ENCODE measurements at regions of chr5 and their contacts with region 1.

Region 1: DNA sequence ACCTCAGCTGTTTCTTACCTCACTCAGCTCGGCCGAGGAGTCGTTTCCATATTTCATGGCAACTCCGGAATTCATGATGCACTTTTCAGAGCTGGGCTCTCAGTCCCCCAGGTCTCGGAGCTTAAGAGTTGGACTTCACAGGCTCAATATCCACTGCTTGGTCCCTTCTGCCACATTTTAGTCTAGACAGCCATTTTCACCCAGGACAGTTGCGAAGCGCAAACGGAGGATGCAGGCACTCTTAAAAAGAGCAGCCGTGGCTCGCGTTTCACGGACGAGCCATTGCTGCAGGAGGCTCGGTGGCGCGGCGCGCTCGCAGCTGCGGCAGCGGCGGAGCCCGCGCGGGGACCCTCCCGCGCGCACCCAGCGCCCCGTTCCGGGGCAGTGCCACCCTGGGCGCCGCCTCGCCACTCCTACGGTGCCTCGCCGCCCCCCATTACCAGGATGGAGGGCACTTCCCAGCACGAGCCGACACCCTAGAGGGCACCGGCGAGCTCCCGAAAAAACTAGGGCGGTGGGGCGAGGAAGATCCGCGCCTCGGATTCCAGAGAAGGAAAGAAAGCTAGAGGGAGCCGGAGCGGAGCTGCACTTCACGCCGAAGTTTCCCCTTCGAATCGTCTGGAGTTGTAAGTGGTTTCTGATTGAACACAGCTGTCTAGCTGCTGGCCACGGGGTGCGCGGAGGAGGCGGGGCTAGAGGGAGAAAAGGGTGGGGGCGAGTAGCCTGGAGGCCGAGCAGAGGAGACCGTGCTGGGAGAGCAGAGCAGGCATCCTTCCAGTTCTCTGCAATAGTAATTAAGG is 140.3 kb downstream of the TSSK1B start:
- DNase-seq: peak; percentile 92 to 96
- ATAC-seq: peak; percentile 97 to 99 (median 98)
- H3K4me3 ChIP-seq: peak overlapping the region; percentile 58 to 93 (median 76)
- H3K27ac ChIP-seq: peak overlapping the region; percentile 79 to 96 (median 92)
- H3K4me1 ChIP-seq: peaks cover 0 to 51% (median 27%) of the 10 kb centered on the region in 9 donors
- H3K27me3 ChIP-seq: peaks cover 0 to 52% (median 0%) of the 10 kb centered on the region in 7 donors
- CTCF ChIP-seq: peak in 3 of 9 donors; percentile 44 to 50 (median 48)

Region 2: GRCh38 chr5:113043491-113043931 is 251.0 kb before region 1 on chr5:
- intact Hi-C with region 1: loop called in 3 of 10 experiments (anchors 10 kb)
- DNase-seq: peak; percentile 70 to 76
- ATAC-seq: peak; percentile 77 to 96 (median 94)
- H3K4me3 ChIP-seq: no peak overlapping the region
- H3K27ac ChIP-seq: peak overlapping the region in 7 of 10 donors; percentile 10 to 68 (median 50)
- H3K4me1 ChIP-seq: peaks cover 4 to 27% (median 17%) of the 10 kb centered on the region in 9 donors
- H3K27me3 ChIP-seq: no peaks in the 10 kb centered on the region
- CTCF ChIP-seq: peak; percentile 15 to 64 (median 40)

Region 3: DNA sequence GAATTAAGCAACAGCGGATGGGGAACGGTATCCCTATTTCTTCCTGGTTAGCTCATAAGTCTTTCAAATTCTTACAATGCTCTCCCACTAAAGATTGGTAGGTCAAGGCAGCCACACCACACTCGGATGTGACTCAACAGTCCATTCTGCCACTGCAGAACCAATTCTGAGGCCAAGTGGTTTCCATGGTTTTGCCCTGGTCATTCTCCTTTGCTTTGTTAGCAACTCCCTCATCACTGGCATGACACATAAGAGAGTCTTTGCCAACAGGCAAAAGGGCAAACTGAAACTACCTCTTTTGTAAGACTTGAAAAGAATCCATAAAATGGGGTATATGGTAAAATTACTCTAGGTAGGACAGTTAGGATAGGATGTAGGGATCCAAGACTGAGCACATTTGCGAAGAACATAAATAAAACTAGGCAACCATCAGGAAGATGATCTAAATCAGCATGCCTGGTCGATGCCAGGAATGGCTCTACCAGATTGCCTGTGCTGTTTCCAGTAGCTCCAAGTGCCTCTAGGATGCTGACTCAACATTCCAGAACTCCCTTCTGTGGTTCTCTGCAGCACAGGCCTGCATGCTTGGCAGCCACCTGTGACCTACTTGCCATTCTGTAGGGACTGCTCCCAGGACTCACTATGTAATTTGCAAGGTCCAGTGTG is 212.5 kb before region 1 on chr5:
- intact Hi-C with region 1: loop called in 4 of 10 experiments (anchors 5 to 10 kb)
- DNase-seq: no peak
- ATAC-seq: peak in 1 of 8 donors; percentile 55
- H3K4me3 ChIP-seq: no peak overlapping the region
- H3K27ac ChIP-seq: no peak overlapping the region
- H3K4me1 ChIP-seq: peaks cover 0 to 49% (median 28%) of the 10 kb centered on the region in 9 donors
- H3K27me3 ChIP-seq: no peaks in the 10 kb centered on the region
- CTCF ChIP-seq: no peak

Region 4: GRCh38 chr5:113123618-113124017 is 170.9 kb before region 1 on chr5:
- intact Hi-C with region 1: loop called in 2 of 10 experiments (anchors 5 to 10 kb)
- DNase-seq: no peak
- ATAC-seq: no peak
- H3K4me3 ChIP-seq: no peak overlapping the region
- H3K27ac ChIP-seq: peak overlapping the region in 2 of 10 donors; percentile 9 to 38
- H3K4me1 ChIP-seq: peaks cover 10 to 73% (median 61%) of the 10 kb centered on the region in 9 donors
- H3K27me3 ChIP-seq: no peaks in the 10 kb centered on the region
- CTCF ChIP-seq: peak in 3 of 9 donors; percentile 32 to 39 (median 39)

Region 5: GRCh38 chr5:113204525-113205161 is 89.9 kb before region 1 on chr5:
- intact Hi-C with region 1: loop called in 5 of 10 experiments (anchors 5 kb)
- DNase-seq: peak; percentile 38 to 45
- ATAC-seq: peak in 6 of 8 donors; percentile 12 to 61 (median 42)
- H3K4me3 ChIP-seq: no peak overlapping the region
- H3K27ac ChIP-seq: peak overlapping the region in 6 of 10 donors; percentile 3 to 76 (median 43)
- H3K4me1 ChIP-seq: peaks cover 2 to 93% (median 73%) of the 10 kb centered on the region in 9 donors
- H3K27me3 ChIP-seq: no peaks in the 10 kb centered on the region
- CTCF ChIP-seq: no peak

Region 6: GRCh38 chr5:113212244-113212920 is 82.1 kb before region 1 on chr5:
- intact Hi-C with region 1: loop called in 6 of 10 experiments (anchors 5 to 10 kb)
- DNase-seq: peak; percentile 43 to 64
- ATAC-seq: peak in 5 of 8 donors; percentile 18 to 74 (median 61)
- H3K4me3 ChIP-seq: no peak overlapping the region
- H3K27ac ChIP-seq: peak overlapping the region in 3 of 10 donors; percentile 13 to 46 (median 24)
- H3K4me1 ChIP-seq: peaks cover 7 to 88% (median 58%) of the 10 kb centered on the region in 9 donors
- H3K27me3 ChIP-seq: no peaks in the 10 kb centered on the region
- CTCF ChIP-seq: no peak

Region 7: DNA sequence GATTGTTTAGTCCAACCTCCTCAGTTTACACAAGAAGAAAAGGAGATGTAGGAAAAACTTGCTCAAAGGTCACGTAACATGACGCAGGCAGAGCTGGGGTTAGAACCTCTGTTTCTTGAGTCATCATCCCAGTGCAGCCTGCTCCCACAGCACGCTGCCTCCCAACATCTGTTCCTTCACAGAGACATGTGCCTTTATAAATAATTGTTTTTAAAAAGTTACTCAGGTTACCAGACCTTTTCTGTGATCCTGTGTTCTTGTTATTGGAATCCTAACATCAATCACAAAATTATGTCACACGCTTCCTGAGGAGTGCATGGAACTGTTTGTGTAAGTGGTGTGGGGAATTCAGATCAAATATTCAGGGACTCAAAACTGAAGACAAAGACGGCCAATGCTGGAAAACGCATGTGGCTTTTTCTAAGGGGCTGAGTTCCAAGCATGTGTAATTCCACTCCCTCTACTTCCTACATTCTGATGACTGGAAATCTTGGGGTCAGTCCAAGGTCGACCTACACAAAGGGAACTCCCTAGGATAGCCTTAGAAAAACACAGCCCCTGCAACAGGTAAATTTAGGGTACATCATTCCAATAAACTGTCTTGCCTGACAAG is 44.1 kb before region 1 on chr5:
- intact Hi-C with region 1: loop called in 5 of 10 experiments (anchors 5 kb)
- DNase-seq: peak in 1 of 2 donors; percentile 73
- ATAC-seq: peak; percentile 53 to 84 (median 76)
- H3K4me3 ChIP-seq: no peak overlapping the region
- H3K27ac ChIP-seq: peak overlapping the region in 9 of 10 donors; percentile 53 to 83 (median 68)
- H3K4me1 ChIP-seq: peaks cover 15 to 83% (median 59%) of the 10 kb centered on the region in 9 donors
- H3K27me3 ChIP-seq: no peaks in the 10 kb centered on the region
- CTCF ChIP-seq: no peak